Stomach (tissue), 19 donors: ENCODE measurements at regions of chr14 and their contacts with region 1.

Region 1: DNA sequence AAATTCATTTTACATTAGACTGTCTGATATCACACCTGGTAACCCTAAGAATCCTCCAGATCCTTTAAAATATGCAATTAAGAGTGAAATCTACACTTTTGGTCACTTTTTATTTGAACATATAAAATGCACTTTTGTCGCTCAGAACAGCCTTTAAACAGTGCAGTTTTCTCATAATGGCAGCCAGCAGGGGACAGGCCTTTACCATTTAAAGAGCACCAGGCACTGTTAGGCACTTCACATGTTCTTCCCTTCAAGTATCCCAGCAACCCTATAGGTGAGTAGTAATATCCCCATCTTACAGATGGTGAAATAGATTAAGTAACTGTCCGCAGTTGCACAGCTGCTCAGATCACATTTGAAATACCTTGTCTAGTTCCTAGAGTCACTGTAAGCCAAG is 11.3 kb upstream of the SAMD4A start:
- DNase-seq: no peak
- H3K4me3 ChIP-seq: no peak overlapping the region
- H3K27ac ChIP-seq: no peak overlapping the region
- H3K4me1 ChIP-seq: no peaks in the 10 kb centered on the region
- H3K27me3 ChIP-seq: no peaks in the 10 kb centered on the region
- CTCF ChIP-seq: no peak
- EP300 ChIP-seq: no peak
- POLR2A ChIP-seq: no peak

Region 2: DNA sequence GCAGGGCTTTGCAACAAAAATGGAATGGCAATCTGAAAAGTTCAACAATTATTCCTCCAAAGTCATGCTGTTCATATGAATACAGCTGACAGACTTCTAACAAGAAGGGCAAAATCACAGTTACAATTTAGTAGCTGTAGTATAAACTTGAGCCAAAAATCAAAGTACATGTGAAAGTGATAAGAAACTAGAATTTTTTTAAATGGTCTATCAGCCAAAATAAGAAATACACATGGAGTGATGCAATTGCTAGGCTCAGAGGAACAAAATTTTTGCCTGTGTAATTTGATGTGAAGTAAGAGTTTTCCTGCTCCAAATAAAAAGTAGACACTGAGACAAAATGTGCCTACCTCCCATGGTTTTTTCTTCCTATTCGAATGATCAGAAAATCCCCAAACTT is 326.5 kb before region 1 on chr14:
- intact Hi-C with region 1: no loop called
- DNase-seq: no peak
- H3K4me3 ChIP-seq: no peak overlapping the region
- H3K27ac ChIP-seq: no peak overlapping the region
- H3K4me1 ChIP-seq: peaks cover 0 to 26% (median 8%) of the 10 kb centered on the region in 4 donors
- H3K27me3 ChIP-seq: no peaks in the 10 kb centered on the region
- CTCF ChIP-seq: no peak
- EP300 ChIP-seq: no peak
- POLR2A ChIP-seq: no peak

Region 3: GRCh38 chr14:54769947-54770863 is 214.6 kb after region 1 on chr14:
- intact Hi-C with region 1: loop called (anchors 5 kb)
- DNase-seq: peak in 1 of 2 donors; percentile 30
- H3K4me3 ChIP-seq: no peak overlapping the region
- H3K27ac ChIP-seq: peak overlapping the region in 3 of 5 donors; percentile 7 to 89 (median 84)
- H3K4me1 ChIP-seq: peaks cover 7 to 29% (median 21%) of the 10 kb centered on the region in 4 donors
- H3K27me3 ChIP-seq: no peaks in the 10 kb centered on the region
- CTCF ChIP-seq: no peak
- EP300 ChIP-seq: no peak
- POLR2A ChIP-seq: no peak